ENCODE measurements at regions of chr17 and their contacts with region 1.

Region 1: DNA sequence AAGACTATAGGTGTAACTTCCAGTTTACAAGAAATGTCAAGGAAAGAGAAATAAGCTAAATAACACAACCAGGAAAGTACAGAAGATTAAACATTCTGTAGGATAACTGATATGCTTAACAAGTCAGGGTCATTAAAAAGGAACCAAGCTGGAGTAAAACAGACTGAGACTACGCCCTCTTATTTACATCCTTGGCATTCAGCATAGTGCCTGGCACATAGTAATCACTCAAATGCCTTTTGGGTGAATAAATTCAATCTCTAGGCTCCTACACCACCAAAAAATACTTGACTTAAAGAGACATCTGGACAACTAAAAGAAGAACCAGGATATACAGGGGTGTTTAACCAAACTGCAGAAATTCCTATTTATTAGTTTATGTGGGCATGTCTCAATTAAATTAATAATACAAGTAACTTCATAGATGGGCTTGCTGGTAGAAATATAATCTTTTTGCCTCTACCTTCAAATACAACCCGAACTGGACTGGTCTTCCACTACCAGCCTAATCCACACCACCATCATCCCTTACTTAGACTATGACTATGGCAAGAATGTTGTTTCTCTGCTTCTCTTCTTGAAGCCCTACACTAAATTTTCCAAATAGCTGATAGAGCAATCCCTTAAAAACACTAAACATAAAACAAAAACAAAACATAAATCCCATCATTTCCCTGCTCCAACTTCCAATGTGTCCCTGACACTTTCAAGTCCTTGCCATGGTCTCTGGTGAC is 47.7 kb upstream of the ULK2 start:
- DNase-seq: no peak

Region 2: GRCh38 chr17:19338031-19338990 is 577.1 kb before region 1 on chr17:
- intact Hi-C with region 1: no loop called
- DNase-seq: peak; percentile 87

Region 3: GRCh38 chr17:19799796-19800195 is 115.6 kb before region 1 on chr17:
- intact Hi-C with region 1: loop called in 1 of 2 experiments (anchors 10 kb)
- DNase-seq: no peak

Region 4: GRCh38 chr17:19867064-19867313 is 48.4 kb before region 1 on chr17:
- intact Hi-C with region 1: no loop called
- DNase-seq: peak; percentile 91